MCF 10A (cell line): ENCODE measurements at regions of chr1 and their contacts with region 1.

Region 1: GRCh38 chr1:68442822-68443556 is 6.8 kb downstream of the RPE65 start:
- DNase-seq: peak; percentile 82
- H3K4me3 Mint-ChIP-seq: no peak overlapping the region
- H3K27ac Mint-ChIP-seq: no peak overlapping the region
- H3K4me1 Mint-ChIP-seq: peaks cover 14% of the 10 kb centered on the region
- H3K27me3 Mint-ChIP-seq: no peaks in the 10 kb centered on the region
- CTCF ChIP-seq: peak; percentile 54

Region 2: DNA sequence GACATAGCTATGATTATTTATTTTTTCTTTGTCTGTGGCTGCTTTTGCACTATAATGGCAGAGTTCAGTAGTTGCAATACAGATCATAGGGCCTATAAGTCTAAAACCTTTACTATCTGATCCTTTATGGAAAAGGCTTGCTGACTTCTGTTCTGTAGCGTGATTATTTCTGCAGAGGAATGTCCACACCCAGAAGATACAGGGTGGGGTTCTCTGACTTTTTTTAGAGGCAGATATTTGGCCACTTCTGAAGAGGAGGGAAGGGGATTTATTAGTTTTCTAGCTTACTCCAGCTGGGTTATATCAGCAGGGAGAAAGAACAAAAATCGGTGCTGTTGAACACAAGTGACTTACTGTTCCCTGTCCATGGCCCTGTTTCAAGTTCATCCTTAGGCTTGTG is 90.8 kb before region 1 on chr1:
- CTCF ChIA-PET with region 1: interaction called, 5 read pairs
- POLR2A ChIA-PET with region 1: no interaction called
- intact Hi-C with region 1: loop called (anchors 5 kb)
- DNase-seq: no peak
- H3K4me3 Mint-ChIP-seq: no peak overlapping the region
- H3K27ac Mint-ChIP-seq: no peak overlapping the region
- H3K4me1 Mint-ChIP-seq: no peaks in the 10 kb centered on the region
- H3K27me3 Mint-ChIP-seq: no peaks in the 10 kb centered on the region
- CTCF ChIP-seq: no peak

Region 3: GRCh38 chr1:68429233-68429808 is 13.7 kb before region 1 on chr1:
- CTCF ChIA-PET with region 1: interaction called, 10 read pairs
- POLR2A ChIA-PET with region 1: no interaction called
- intact Hi-C with region 1: no loop called
- DNase-seq: no peak
- H3K4me3 Mint-ChIP-seq: no peak overlapping the region
- H3K27ac Mint-ChIP-seq: no peak overlapping the region
- H3K4me1 Mint-ChIP-seq: no peaks in the 10 kb centered on the region
- H3K27me3 Mint-ChIP-seq: no peaks in the 10 kb centered on the region
- CTCF ChIP-seq: no peak

Region 4: GRCh38 chr1:68459796-68460195 is 16.8 kb after region 1 on chr1:
- CTCF ChIA-PET with region 1: interaction called, 14 read pairs
- POLR2A ChIA-PET with region 1: no interaction called
- intact Hi-C with region 1: no loop called
- DNase-seq: no peak
- H3K4me3 Mint-ChIP-seq: no peak overlapping the region
- H3K27ac Mint-ChIP-seq: no peak overlapping the region
- H3K4me1 Mint-ChIP-seq: no peaks in the 10 kb centered on the region
- H3K27me3 Mint-ChIP-seq: no peaks in the 10 kb centered on the region
- CTCF ChIP-seq: no peak

Region 5: DNA sequence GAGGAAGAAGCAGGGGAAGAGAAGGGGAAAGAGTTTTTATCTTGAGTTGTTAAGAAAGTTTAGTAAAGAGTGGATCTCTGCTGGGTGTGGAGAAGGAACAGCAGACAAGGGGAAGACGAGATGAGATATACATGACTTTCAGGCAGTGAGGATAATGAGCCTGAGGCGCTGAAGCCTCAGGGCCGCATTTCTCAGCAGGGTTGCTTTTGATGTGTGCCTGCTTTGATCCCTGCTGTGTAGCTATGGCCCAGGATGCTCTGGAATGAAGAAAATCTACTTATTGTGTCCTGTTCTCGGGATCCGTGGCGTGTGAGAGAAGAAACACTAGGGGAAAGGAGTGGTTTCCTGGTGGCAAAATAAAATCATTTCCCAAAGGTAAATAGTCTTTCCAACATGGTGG is 21.9 kb after region 1 on chr1:
- CTCF ChIA-PET with region 1: interaction called, 11 read pairs
- POLR2A ChIA-PET with region 1: no interaction called
- intact Hi-C with region 1: no loop called
- DNase-seq: no peak
- H3K4me3 Mint-ChIP-seq: no peak overlapping the region
- H3K27ac Mint-ChIP-seq: no peak overlapping the region
- H3K4me1 Mint-ChIP-seq: no peaks in the 10 kb centered on the region
- H3K27me3 Mint-ChIP-seq: no peaks in the 10 kb centered on the region
- CTCF ChIP-seq: no peak